H1 (cell line): ENCODE measurements at regions of chr17 and their contacts with region 1.

Region 1: GRCh38 chr17:68205251-68205807 is 42.5 kb upstream of the AMZ2 start:
- DNase-seq: peak in 1 of 2 experiments; percentile 97
- H3K4me3 ChIP-seq: peak overlapping the region; percentile 57 to 85 (median 66)
- H3K27ac ChIP-seq: peak overlapping the region; percentile 77; the same call in 1 of the 2 replicates
- H3K4me1 ChIP-seq: peaks cover under 1 to 8% (median 3%) of the 10 kb centered on the region in 4 experiments; a peak in 6 of 7 replicates
- H3K27me3 ChIP-seq: peaks cover 4 to 41% (median 26%) of the 10 kb centered on the region in 4 experiments
- CTCF ChIP-seq: peak; percentile 83 to 88 (median 86)
- EP300 ChIP-seq: 0 out of 3 replicates have a peak, but pooled peaks of 1 of the 2 experiments have one; percentile 47
- POLR2A ChIP-seq: no peak; a peak in 1 of 3 replicates
- RAD21 ChIP-seq: peak; percentile 25 to 56; a peak in 2 of 4 replicates

Region 2: GRCh38 chr17:68057531-68057952 is 147.8 kb before region 1 on chr17:
- CTCF ChIA-PET with region 1: interaction called, 16 read pairs
- POLR2A ChIA-PET with region 1: no interaction called
- DNase-seq: no peak
- H3K4me3 ChIP-seq: no peak overlapping the region
- H3K27ac ChIP-seq: no peak overlapping the region
- H3K4me1 ChIP-seq: no peaks in the 10 kb centered on the region
- H3K27me3 ChIP-seq: no peaks in the 10 kb centered on the region
- CTCF ChIP-seq: peak in 2 of 3 experiments; percentile 53 to 66; a peak in 3 of 4 replicates
- EP300 ChIP-seq: no peak
- POLR2A ChIP-seq: no peak
- RAD21 ChIP-seq: peak; percentile 54 to 65

Region 3: DNA sequence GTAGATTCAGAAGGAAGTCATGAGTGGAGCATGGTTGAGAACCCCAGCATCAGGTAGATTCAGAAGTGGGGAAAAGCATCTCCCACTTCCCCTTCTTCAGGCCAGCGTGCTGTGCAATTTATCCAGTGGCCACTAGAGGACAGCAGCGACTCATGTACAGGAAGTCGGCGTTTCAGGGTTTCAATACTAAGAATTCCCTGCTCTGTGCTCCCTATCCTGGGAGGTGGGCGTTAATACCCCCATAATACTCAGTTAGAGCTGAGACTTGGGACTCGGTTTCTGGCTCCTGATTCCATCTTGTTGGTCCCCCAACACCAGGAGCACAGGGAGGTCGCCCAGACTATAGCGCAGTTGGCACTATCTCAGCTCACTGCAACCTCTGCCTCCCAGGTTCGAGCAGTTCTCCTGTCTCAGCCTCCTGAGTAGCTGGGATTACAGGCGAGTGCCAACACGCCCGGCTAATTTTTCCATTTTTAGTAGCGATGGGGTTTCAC is 32.8 kb before region 1 on chr17:
- CTCF ChIA-PET with region 1: interaction called, 73 read pairs
- POLR2A ChIA-PET with region 1: interaction called, 7 read pairs
- DNase-seq: peak in 1 of 2 experiments; percentile 87
- H3K4me3 ChIP-seq: no peak overlapping the region
- H3K27ac ChIP-seq: no peak overlapping the region
- H3K4me1 ChIP-seq: no peaks in the 10 kb centered on the region
- H3K27me3 ChIP-seq: no peaks in the 10 kb centered on the region
- CTCF ChIP-seq: peak; percentile 80 to 90 (median 86)
- EP300 ChIP-seq: no peak
- POLR2A ChIP-seq: no peak
- RAD21 ChIP-seq: peak; percentile 91 to 93

Region 4: DNA sequence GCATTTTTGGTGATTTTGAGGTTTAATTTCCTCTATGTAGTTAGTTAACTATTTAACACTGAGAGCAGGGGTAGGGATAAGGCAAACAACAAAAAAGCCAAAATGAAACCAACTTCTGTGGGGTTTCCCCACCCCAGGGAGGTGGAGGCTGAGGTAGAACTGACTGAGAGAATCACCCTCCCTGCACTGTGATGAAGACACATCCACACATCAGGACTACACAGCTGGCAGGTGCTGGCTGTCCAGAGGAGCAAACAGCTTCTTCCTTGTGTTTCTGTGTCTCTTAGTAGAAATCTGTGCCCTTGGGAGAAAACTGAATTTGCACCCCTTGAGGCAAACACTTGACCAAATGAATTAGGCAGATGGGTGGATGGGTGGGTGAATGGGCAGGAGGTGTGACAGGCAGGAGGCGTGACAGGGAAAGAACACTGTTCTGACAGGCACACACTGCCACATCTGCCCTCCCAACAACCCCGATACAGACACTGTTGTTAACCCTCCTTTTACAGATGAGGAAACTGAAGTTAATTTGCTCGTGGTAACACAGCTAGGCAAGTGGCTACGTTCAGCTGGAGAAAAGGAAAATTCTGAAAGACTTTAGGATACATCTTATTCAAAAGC is 20.4 kb before region 1 on chr17:
- CTCF ChIA-PET with region 1: interaction called, 63 read pairs
- POLR2A ChIA-PET with region 1: interaction called, 6 read pairs
- DNase-seq: no peak
- H3K4me3 ChIP-seq: no peak overlapping the region
- H3K27ac ChIP-seq: no peak overlapping the region
- H3K4me1 ChIP-seq: peaks cover 0 to 4% (median 2%) of the 10 kb centered on the region in 4 experiments; a peak in 3 of 7 replicates
- H3K27me3 ChIP-seq: no peaks in the 10 kb centered on the region
- CTCF ChIP-seq: no peak
- EP300 ChIP-seq: no peak
- POLR2A ChIP-seq: no peak
- RAD21 ChIP-seq: no peak

Region 5: DNA sequence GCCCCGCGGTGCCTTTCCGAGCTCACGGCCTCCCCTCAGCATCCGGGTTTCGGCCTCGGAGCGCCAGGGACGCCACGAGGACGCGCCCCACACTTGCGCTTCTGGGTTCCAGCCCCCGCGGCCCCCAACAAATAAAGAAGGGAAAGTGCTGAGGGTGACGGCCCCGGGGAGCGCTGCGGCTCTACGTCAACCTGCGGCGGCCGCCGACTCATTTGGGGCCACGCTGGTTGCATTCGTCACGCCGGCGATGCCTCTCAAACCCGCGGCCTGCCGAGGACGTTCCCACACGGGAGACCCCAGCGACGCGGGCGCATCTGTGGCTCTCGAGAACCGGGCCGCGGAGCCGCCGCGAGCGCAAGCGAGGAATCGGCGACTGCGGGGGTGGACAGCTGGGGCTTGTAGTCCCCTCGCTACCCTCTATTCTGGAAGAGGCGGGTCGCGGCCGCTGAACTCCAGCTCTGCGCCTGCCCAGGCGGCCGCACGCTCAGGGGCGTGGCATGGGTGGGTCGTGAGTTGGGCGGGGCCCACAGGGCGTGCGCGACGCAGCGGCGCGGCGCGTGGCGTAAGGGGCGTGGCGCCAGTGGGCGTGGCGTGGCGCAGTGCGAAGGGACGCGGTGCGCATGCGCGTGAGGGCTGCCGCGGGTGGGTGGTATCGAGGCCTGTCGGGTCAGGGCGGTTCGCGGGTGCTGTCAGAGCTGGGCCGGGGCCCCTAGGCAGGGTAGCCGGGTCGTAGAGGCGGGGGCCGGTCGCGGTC is 42.3 kb after region 1 on chr17 and contains the start of gene AMZ2:
- CTCF ChIA-PET with region 1: interaction called, 18 read pairs
- POLR2A ChIA-PET with region 1: no interaction called
- DNase-seq: peak; percentile 68 to 98
- H3K4me3 ChIP-seq: peak within 1 kb of the TSS; percentile 75 to 88 (median 78)
- H3K27ac ChIP-seq: peak within 1 kb of the TSS; percentile 77
- H3K4me1 ChIP-seq: no peaks in the 10 kb centered on the region; a peak in 2 of 7 replicates
- H3K27me3 ChIP-seq: no peaks in the 10 kb centered on the region
- CTCF ChIP-seq: no peak
- EP300 ChIP-seq: no peak
- POLR2A ChIP-seq: peak; percentile 76 to 82
- RAD21 ChIP-seq: no peak
- total RNA-seq, gene AMZ2: 66.4 and 71.0 TPM in 2 replicates

Region 6: DNA sequence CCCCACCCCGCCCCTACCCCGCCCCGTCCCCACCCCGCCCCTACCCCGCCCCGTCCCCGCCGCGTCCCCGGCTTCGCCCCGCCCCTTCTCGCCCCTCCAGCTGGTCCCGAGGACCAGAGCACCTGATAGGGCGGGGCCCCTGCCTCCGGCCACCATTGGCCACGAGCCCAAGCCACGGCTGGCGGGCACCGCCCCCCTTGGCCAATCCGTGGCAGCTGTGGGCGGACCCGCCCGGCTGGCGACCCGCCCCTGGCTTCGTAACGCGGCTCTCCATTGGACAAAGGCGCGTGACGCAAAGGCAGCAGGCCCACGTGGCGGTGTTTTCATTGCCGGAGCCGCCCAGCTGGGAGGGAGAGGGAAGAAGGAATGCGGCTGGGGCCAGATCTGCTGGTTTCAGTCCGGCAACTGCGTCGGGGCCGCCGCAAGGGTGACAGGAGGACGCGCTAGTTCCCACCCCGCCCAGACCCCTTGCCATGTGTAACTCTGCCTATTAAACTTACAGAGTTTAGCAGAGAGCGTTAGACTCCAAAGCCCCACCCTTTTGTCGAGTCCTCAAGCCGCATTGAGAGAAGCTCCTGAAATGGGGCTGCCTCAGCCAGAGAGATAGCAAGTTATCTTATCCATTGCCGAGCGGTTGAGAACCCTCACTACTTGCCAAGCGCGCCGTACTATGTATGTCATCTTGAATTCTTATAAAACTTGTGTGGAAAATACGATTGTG is 252.4 kb after region 1 on chr17:
- CTCF ChIA-PET with region 1: interaction called, 11 read pairs
- POLR2A ChIA-PET with region 1: interaction called, 3 read pairs
- DNase-seq: peak; percentile 97 to 98
- H3K4me3 ChIP-seq: peak overlapping the region; percentile 40 to 71 (median 53)
- H3K27ac ChIP-seq: no peak overlapping the region
- H3K4me1 ChIP-seq: peaks cover 3 to 7% (median 5%) of the 10 kb centered on the region in 4 experiments; a peak in 6 of 7 replicates
- H3K27me3 ChIP-seq: no peaks in the 10 kb centered on the region
- CTCF ChIP-seq: no peak
- EP300 ChIP-seq: peak in 1 of 2 experiments; percentile 83; a peak in 1 of 3 replicates
- POLR2A ChIP-seq: peak in 1 of 2 experiments; percentile 64; a peak in 1 of 3 replicates
- RAD21 ChIP-seq: 0 out of 4 replicates have a peak, but pooled peaks of 1 of the 2 experiments have one; percentile 2